MCF 10A (cell line): ENCODE measurements at regions of chr17 and their contacts with region 1.

Region 1: GRCh38 chr17:28812091-28812747 is 30.4 kb downstream of the FAM222B start:
- DNase-seq: peak; percentile 97
- H3K4me3 Mint-ChIP-seq: peak overlapping the region; percentile 90
- H3K27ac Mint-ChIP-seq: peak overlapping the region; percentile 98
- H3K4me1 Mint-ChIP-seq: peaks cover 28% of the 10 kb centered on the region
- H3K27me3 Mint-ChIP-seq: no peaks in the 10 kb centered on the region
- CTCF ChIP-seq: no peak

Region 2: DNA sequence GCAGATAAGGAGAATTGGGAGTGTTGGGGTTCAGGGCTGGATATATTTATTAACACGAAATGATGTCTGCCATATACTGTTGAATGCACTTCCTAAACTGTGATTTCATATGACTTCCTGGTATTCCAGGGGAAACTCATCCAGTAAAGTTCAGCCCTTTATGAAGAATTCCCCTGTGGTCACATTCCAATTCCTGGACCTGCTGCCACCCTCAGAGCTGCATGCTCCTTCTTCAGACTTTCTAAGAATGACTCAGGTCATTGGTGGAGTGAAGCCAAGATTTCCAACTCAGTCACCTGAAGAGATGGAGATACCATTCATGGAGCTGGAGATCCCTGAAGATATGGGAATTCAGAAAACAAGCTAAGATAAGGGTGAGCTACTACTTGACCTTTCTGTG is 607.5 kb before region 1 on chr17:
- CTCF ChIA-PET with region 1: no interaction called
- POLR2A ChIA-PET with region 1: no interaction called
- intact Hi-C with region 1: no loop called
- DNase-seq: peak; percentile 27
- H3K4me3 Mint-ChIP-seq: no peak overlapping the region
- H3K27ac Mint-ChIP-seq: no peak overlapping the region
- H3K4me1 Mint-ChIP-seq: no peaks in the 10 kb centered on the region
- H3K27me3 Mint-ChIP-seq: no peaks in the 10 kb centered on the region
- CTCF ChIP-seq: no peak

Region 3: GRCh38 chr17:28698253-28698941 is 113.8 kb before region 1 on chr17:
- CTCF ChIA-PET with region 1: no interaction called
- POLR2A ChIA-PET with region 1: no interaction called
- intact Hi-C with region 1: no loop called
- DNase-seq: no peak
- H3K4me3 Mint-ChIP-seq: no peak overlapping the region
- H3K27ac Mint-ChIP-seq: no peak overlapping the region
- H3K4me1 Mint-ChIP-seq: no peaks in the 10 kb centered on the region
- H3K27me3 Mint-ChIP-seq: no peaks in the 10 kb centered on the region
- CTCF ChIP-seq: no peak

Region 4: DNA sequence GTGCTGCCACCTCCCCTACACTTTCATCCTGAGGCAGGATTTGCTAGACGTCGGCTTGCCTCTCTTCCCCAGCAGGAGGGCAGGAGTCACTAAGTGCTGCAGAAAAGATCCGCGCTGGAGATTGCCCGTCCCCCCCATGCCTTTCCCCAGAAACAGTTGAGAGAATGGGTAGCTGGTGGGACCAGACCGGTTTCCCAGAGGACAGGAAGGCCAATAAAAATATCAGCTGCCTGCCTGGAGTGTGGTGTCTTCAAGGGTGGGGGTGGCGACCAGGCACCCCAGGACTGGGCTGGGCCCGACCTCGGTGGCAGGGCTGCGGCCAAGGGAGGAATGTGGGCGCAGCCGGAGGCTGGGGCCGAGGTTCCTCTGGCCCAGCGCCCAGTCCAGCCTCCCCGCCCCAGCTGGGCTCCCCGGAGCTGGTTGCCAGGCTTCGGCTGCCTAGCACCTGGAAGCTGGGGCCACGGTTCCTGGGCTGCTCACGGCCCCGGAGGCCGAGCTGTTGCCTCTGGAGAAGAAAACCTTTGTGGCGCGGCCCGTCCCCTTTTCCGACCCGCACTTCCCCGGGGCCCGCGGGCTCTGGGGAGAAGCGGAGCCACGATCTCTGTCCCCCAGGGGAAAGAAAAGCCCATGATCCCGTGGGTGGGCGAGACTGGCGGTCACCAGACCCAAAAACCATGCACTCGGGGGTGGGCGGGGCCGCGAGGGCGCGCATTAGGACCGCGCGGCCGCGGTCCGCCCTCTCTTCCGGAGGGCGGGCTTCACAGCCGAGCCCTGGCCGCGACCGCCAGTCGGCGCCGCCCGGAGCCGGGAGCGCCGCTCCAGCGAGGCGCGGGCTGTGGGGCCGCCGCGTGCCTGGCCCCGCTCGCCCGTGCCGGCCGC is 68.8 kb before region 1 on chr17 and contains the start of gene TRAF4:
- CTCF ChIA-PET with region 1: interaction called, 3 read pairs
- POLR2A ChIA-PET with region 1: interaction called, 18 read pairs
- intact Hi-C with region 1: no loop called
- DNase-seq: peak; percentile 97
- H3K4me3 Mint-ChIP-seq: peak within 1 kb of the TSS; percentile 91
- H3K27ac Mint-ChIP-seq: peak within 1 kb of the TSS; percentile 93
- H3K4me1 Mint-ChIP-seq: peaks cover 13% of the 10 kb centered on the region
- H3K27me3 Mint-ChIP-seq: no peaks in the 10 kb centered on the region
- CTCF ChIP-seq: no peak
- total RNA-seq, gene TRAF4: 106 and 126 TPM in 2 replicates

Region 5: GRCh38 chr17:28788100-28788499 is 24.1 kb before region 1 on chr17:
- CTCF ChIA-PET with region 1: interaction called, 3 read pairs
- POLR2A ChIA-PET with region 1: interaction called, 11 read pairs
- intact Hi-C with region 1: no loop called
- DNase-seq: no peak
- H3K4me3 Mint-ChIP-seq: no peak overlapping the region
- H3K27ac Mint-ChIP-seq: no peak overlapping the region
- H3K4me1 Mint-ChIP-seq: peaks cover 2% of the 10 kb centered on the region
- H3K27me3 Mint-ChIP-seq: no peaks in the 10 kb centered on the region
- CTCF ChIP-seq: no peak

Region 6: GRCh38 chr17:28842282-28843012 is 30.2 kb after region 1 on chr17 and contains the start of gene FAM222B:
- CTCF ChIA-PET with region 1: no interaction called
- POLR2A ChIA-PET with region 1: interaction called, 40 read pairs
- intact Hi-C with region 1: loop called (anchors 2 kb)
- DNase-seq: peak; percentile 78
- H3K4me3 Mint-ChIP-seq: peak within 1 kb of the TSS; percentile 92
- H3K27ac Mint-ChIP-seq: peak within 1 kb of the TSS; percentile 50
- H3K4me1 Mint-ChIP-seq: peaks cover 5% of the 10 kb centered on the region
- H3K27me3 Mint-ChIP-seq: no peaks in the 10 kb centered on the region
- CTCF ChIP-seq: no peak
- total RNA-seq, gene FAM222B: 18.5 and 22.2 TPM in 2 replicates

Region 7: GRCh38 chr17:28902819-28903545 is 90.8 kb after region 1 on chr17 and contains the start of gene DHRS13:
- CTCF ChIA-PET with region 1: interaction called, 3 read pairs
- POLR2A ChIA-PET with region 1: interaction called, 38 read pairs
- intact Hi-C with region 1: no loop called
- DNase-seq: peak; percentile 93
- H3K4me3 Mint-ChIP-seq: peak within 1 kb of the TSS; percentile 72
- H3K27ac Mint-ChIP-seq: peak within 1 kb of the TSS; percentile 63
- H3K4me1 Mint-ChIP-seq: peaks cover 30% of the 10 kb centered on the region
- H3K27me3 Mint-ChIP-seq: no peaks in the 10 kb centered on the region
- CTCF ChIP-seq: peak; percentile 98
- total RNA-seq, gene DHRS13: 9.1 and 9.5 TPM in 2 replicates

Region 8: DNA sequence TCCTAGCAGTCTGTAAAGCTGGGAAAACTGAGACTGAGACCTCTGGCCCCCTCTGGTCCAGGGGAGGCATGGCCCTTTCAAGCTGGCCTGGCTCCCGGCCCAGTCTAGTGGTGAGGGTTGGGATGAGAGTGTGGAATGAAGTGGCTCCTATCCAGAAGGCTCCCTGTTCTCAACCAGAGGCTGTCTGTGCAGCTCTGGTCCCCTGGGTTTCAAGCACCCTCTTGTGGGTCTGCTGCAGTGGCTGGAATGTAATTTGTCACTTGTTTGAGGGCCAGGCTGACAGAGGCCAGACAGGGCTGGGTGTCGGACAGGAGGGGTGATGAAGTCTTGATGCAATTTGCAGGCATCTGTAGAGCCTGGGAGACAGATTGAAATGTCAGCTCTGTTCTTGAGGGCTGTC is 161.2 kb after region 1 on chr17:
- CTCF ChIA-PET with region 1: no interaction called
- POLR2A ChIA-PET with region 1: no interaction called
- intact Hi-C with region 1: no loop called
- DNase-seq: no peak
- H3K4me3 Mint-ChIP-seq: no peak overlapping the region
- H3K27ac Mint-ChIP-seq: no peak overlapping the region
- H3K4me1 Mint-ChIP-seq: no peaks in the 10 kb centered on the region
- H3K27me3 Mint-ChIP-seq: peaks cover 42% of the 10 kb centered on the region
- CTCF ChIP-seq: no peak